ENCODE measurements at regions of chr16 and their contacts with region 1.

Region 1: DNA sequence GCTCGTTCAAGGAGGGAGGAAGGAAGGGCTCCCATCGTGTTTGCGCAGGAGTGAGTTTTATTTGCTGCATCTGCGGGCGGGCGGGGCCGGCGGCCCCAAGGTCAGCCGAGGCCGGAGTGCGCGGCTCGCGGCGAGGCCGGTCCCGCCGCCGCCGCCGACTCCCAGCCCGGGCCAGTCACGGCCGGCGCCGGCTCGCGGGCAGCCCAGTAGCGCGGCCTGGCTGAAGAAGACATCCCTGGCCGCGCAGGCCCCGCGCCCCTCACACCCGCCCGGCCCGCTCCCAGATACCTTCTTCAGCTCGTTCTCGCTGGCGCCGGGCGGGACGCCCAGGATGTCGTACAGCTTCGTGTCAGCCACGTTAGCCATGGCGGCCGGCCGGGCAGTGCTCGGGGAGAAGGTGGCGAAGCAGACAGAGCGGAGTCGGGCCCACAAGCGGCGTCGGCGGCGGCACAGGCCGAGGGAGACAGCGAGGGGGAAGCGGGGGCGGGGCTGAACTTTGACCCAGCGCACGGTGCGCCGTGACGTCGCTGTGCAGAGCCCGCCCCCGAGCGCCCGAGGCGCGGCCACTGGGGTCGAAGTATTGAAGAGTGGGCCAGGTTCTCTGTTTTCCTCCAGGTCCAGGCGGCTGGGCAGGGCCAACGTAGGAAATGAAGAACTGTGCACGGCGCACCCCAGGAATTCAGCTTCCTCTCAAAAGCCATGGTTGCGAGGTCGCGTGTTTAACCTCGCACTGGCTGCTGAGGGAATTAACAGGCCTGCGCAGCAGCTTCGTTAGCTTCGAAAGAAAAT is at the start of gene DNAJA2:
- DNase-seq: peak; percentile 84 to 96 (median 93)
- ATAC-seq: peak; percentile 93
- H3K4me3 ChIP-seq: peak within 1 kb of the TSS; percentile 87 to 89
- H3K4me3 Mint-ChIP-seq: peak within 1 kb of the TSS; percentile 92
- H3K27ac ChIP-seq: peak within 1 kb of the TSS; percentile 96 to 98
- H3K27ac Mint-ChIP-seq: peak within 1 kb of the TSS; percentile 100
- H3K4me1 ChIP-seq: peaks cover 45% of the 10 kb centered on the region
- H3K4me1 Mint-ChIP-seq: peaks cover 53% of the 10 kb centered on the region
- H3K27me3 ChIP-seq: no peaks in the 10 kb centered on the region
- H3K27me3 Mint-ChIP-seq: no peaks in the 10 kb centered on the region
- CTCF ChIP-seq: no peak
- total RNA-seq, gene DNAJA2: 82.8 to 83.1 TPM

Region 2: DNA sequence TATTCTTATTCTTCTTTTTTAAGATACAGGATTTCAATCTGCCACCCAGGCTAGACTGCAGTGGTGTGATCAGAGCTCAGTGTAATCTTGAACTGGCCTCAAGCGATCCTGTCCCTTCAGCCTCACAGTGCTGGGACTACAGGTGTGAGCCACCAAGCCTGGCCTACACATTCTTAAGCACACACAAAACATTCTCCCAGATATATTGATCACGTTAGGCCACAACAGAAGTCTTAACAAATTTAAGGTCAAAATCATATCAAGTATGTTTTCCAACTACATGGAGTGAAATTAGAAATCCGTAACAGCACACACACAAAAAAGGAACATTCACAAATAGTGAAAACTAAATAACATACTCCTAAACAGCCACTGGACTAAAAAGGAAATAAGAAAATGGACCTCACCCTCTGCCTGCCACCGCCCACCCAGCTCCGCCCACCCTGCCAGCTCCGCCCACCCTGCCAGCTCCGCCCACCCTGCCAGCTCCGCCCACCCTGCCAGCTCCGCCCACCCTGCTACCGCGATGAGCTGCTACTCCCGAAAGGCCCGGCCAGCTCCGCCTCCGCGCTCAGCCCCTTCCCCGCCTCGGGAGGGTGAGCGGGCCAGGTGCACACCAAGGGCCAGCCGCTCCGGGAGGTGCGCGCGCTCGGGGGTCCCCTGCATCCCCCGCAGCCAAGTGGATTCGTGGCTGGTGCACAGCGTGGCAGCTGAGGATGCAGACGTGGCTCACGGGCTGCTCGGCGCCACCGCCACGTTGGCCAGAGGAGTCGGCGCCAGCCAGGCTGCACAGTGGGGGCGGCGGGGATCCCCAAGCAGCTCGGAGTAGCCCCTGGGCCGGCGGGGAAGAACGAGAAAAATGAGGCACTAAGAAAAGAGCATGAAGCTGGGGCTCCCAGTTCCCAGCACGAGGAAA is 183.6 kb before region 1 on chr16:
- CTCF ChIA-PET with region 1: no interaction called
- POLR2A ChIA-PET with region 1: no interaction called
- intact Hi-C with region 1: loop called (anchors 2 kb)
- DNase-seq: peak; percentile 66 to 86 (median 78)
- ATAC-seq: peak; percentile 98
- H3K4me3 ChIP-seq: peak overlapping the region; percentile 62 to 69
- H3K4me3 Mint-ChIP-seq: peak overlapping the region; percentile 74
- H3K27ac ChIP-seq: peak overlapping the region in 1 of 2 experiments; percentile 6
- H3K27ac Mint-ChIP-seq: peak overlapping the region; percentile 80
- H3K4me1 ChIP-seq: peaks cover 4% of the 10 kb centered on the region
- H3K4me1 Mint-ChIP-seq: peaks cover 18% of the 10 kb centered on the region
- H3K27me3 ChIP-seq: no peaks in the 10 kb centered on the region
- H3K27me3 Mint-ChIP-seq: no peaks in the 10 kb centered on the region
- CTCF ChIP-seq: no peak

Region 3: GRCh38 chr16:46883690-46884512 is 89.5 kb before region 1 on chr16 and contains the start of gene GPT2:
- CTCF ChIA-PET with region 1: no interaction called
- POLR2A ChIA-PET with region 1: no interaction called
- intact Hi-C with region 1: loop called in 1 of 2 experiments (anchors 1 kb)
- DNase-seq: peak; percentile 27 to 77 (median 59)
- ATAC-seq: peak; percentile 91
- H3K4me3 ChIP-seq: peak within 1 kb of the TSS; percentile 59 to 70
- H3K4me3 Mint-ChIP-seq: peak within 1 kb of the TSS; percentile 92
- H3K27ac ChIP-seq: no peak within 1 kb of the TSS
- H3K27ac Mint-ChIP-seq: no peak within 1 kb of the TSS
- H3K4me1 ChIP-seq: no peaks in the 10 kb centered on the region
- H3K4me1 Mint-ChIP-seq: peaks cover 10% of the 10 kb centered on the region
- H3K27me3 ChIP-seq: no peaks in the 10 kb centered on the region
- H3K27me3 Mint-ChIP-seq: peaks cover 29% of the 10 kb centered on the region
- CTCF ChIP-seq: no peak
- total RNA-seq, gene GPT2: 0.08 TPM in 1 of 2 experiments, not detected in the other

Region 4: GRCh38 chr16:47141773-47142485 is 168.5 kb after region 1 on chr16:
- CTCF ChIA-PET with region 1: no interaction called
- POLR2A ChIA-PET with region 1: no interaction called
- intact Hi-C with region 1: loop called (anchors 5 to 10 kb)
- DNase-seq: peak; percentile 63 to 87 (median 80)
- ATAC-seq: peak; percentile 77
- H3K4me3 ChIP-seq: peak overlapping the region; percentile 3 to 28
- H3K4me3 Mint-ChIP-seq: peak overlapping the region; percentile 76
- H3K27ac ChIP-seq: no peak overlapping the region
- H3K27ac Mint-ChIP-seq: no peak overlapping the region
- H3K4me1 ChIP-seq: peaks cover 12% of the 10 kb centered on the region
- H3K4me1 Mint-ChIP-seq: peaks cover 21% of the 10 kb centered on the region
- H3K27me3 ChIP-seq: peaks cover 3 to 5% of the 10 kb centered on the region in 2 experiments
- H3K27me3 Mint-ChIP-seq: peaks cover 22% of the 10 kb centered on the region
- CTCF ChIP-seq: peak; percentile 85

Region 5: DNA sequence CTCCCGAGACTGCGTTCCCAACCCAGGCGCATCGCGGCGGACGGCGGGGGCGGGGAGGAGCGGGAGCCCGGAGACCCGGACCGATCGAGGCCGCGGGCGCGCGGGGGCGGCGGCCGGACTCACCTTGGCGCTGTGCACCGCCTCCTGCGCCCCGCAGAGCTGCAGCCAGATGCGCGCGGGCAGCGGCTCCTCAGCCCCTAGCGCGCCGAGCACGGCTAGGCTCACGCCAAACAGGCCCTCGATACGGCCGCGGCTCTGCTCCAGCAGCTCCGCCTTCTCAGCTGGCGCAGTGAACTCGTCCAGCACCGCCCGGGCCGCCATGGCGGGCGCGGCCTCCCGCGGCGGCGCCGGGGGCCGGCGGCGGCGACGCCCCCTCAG is 1636.2 kb after region 1 on chr16:
- CTCF ChIA-PET with region 1: no interaction called
- POLR2A ChIA-PET with region 1: interaction called, 4 read pairs
- intact Hi-C with region 1: loop called (anchors 5 kb)
- DNase-seq: no peak
- ATAC-seq: peak; percentile 17
- H3K4me3 ChIP-seq: peak overlapping the region; percentile 81 to 88
- H3K4me3 Mint-ChIP-seq: peak overlapping the region; percentile 86
- H3K27ac ChIP-seq: peak overlapping the region; percentile 72 to 87
- H3K27ac Mint-ChIP-seq: peak overlapping the region; percentile 94
- H3K4me1 ChIP-seq: peaks cover 79% of the 10 kb centered on the region
- H3K4me1 Mint-ChIP-seq: peaks cover 40% of the 10 kb centered on the region
- H3K27me3 ChIP-seq: no peaks in the 10 kb centered on the region
- H3K27me3 Mint-ChIP-seq: no peaks in the 10 kb centered on the region
- CTCF ChIP-seq: no peak